PC-3 (cell line): ENCODE measurements at regions of chr10 and their contacts with region 1.

Region 1: GRCh38 chr10:43888586-43888985 is 239.9 kb upstream of the ZNF32 start:
- DNase-seq: peak; percentile 79
- ATAC-seq: peak; percentile 87
- H3K4me3 ChIP-seq: no peak overlapping the region
- H3K27ac ChIP-seq: no peak overlapping the region
- H3K4me1 ChIP-seq: peaks cover 20% of the 10 kb centered on the region; the same call in 1 of the 2 replicates
- H3K27me3 ChIP-seq: no peaks in the 10 kb centered on the region
- CTCF ChIP-seq: no peak

Region 2: GRCh38 chr10:43775384-43775783 is 113.2 kb before region 1 on chr10:
- CTCF ChIA-PET with region 1: no interaction called
- POLR2A ChIA-PET with region 1: no interaction called
- intact Hi-C with region 1: no loop called
- DNase-seq: no peak
- ATAC-seq: no peak
- H3K4me3 ChIP-seq: no peak overlapping the region
- H3K27ac ChIP-seq: no peak overlapping the region
- H3K4me1 ChIP-seq: no peaks in the 10 kb centered on the region
- H3K27me3 ChIP-seq: no peaks in the 10 kb centered on the region
- CTCF ChIP-seq: no peak

Region 3: GRCh38 chr10:43814663-43815062 is 73.9 kb before region 1 on chr10:
- CTCF ChIA-PET with region 1: no interaction called
- POLR2A ChIA-PET with region 1: no interaction called
- intact Hi-C with region 1: loop called (anchors 2 kb)
- DNase-seq: peak; percentile 16
- ATAC-seq: peak; percentile 77
- H3K4me3 ChIP-seq: no peak overlapping the region
- H3K27ac ChIP-seq: no peak overlapping the region
- H3K4me1 ChIP-seq: no peaks in the 10 kb centered on the region
- H3K27me3 ChIP-seq: no peaks in the 10 kb centered on the region
- CTCF ChIP-seq: no peak

Region 4: GRCh38 chr10:43863859-43864591 is 24.6 kb before region 1 on chr10:
- CTCF ChIA-PET with region 1: no interaction called
- POLR2A ChIA-PET with region 1: no interaction called
- intact Hi-C with region 1: loop called (anchors 1 kb)
- DNase-seq: peak; percentile 77
- ATAC-seq: peak; percentile 75
- H3K4me3 ChIP-seq: no peak overlapping the region
- H3K27ac ChIP-seq: peak overlapping the region; percentile 60
- H3K4me1 ChIP-seq: peaks cover 27% of the 10 kb centered on the region
- H3K27me3 ChIP-seq: 0 out of 2 replicates have a peak, but pooled peaks cover 4% of the 10 kb centered on the region
- CTCF ChIP-seq: no peak

Region 5: DNA sequence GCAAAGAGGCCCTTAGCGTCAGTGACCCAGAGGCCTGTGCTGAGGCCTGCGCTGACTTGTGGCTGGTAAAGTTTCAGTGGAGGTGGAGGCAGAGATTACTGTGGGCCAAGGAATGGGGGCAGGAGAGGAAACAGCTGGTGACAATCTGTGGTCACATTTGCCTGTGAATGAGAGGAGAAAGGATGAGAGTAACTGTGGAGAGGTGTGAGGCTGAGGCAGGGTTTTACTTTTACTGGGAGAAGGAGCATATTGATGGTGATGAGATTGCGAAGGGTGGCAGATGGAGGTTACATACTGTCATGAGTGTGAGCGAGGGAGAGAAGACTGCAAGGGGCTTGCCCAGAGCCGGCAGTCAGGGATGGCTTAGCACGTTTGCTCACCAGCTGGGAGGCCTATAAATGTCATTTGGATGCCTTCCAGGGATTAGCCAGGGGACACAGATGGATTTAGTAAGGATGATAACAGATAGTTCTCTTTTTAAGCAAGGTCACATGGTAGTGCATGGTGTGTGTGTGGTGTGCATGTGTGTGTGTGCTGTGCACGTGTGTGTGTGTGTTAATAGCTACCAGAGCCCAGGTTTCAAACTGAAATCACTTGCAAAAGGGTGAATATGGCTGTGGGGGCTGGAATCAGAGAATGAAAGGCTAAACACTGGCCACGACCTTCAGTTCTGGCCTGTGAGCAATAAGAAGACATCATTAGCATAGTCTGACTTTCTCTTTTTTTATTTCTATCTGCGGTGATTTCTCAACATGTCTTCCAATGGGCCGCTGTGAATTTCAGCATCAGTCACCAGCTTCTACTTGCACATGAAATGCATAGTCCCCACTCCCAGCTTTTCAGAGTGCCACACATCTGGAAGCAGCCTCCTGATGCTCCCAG is 51.6 kb after region 1 on chr10:
- CTCF ChIA-PET with region 1: no interaction called
- POLR2A ChIA-PET with region 1: no interaction called
- intact Hi-C with region 1: loop called (anchors 10 kb)
- DNase-seq: no peak
- ATAC-seq: no peak
- H3K4me3 ChIP-seq: no peak overlapping the region
- H3K27ac ChIP-seq: no peak overlapping the region
- H3K4me1 ChIP-seq: no peaks in the 10 kb centered on the region
- H3K27me3 ChIP-seq: no peaks in the 10 kb centered on the region
- CTCF ChIP-seq: no peak